ENCODE measurements at regions of chr5 and their contacts with region 1.

Region 1: GRCh38 chr5:178153573-178154343 is at the start of gene NHP2:
- DNase-seq: peak; percentile 96 to 98 (median 96)
- H3K4me3 ChIP-seq: peak within 1 kb of the TSS; percentile 65
- H3K4me3 Mint-ChIP-seq: peak within 1 kb of the TSS; percentile 92 to 98 (median 96)
- H3K27ac ChIP-seq: peak within 1 kb of the TSS; percentile 70
- H3K27ac Mint-ChIP-seq: peak within 1 kb of the TSS; percentile 87 to 96 (median 90)
- H3K4me1 ChIP-seq: peaks cover 34% of the 10 kb centered on the region
- H3K4me1 Mint-ChIP-seq: peaks cover 21 to 53% (median 30%) of the 10 kb centered on the region in 4 donors
- H3K27me3 ChIP-seq: no peaks in the 10 kb centered on the region
- H3K27me3 Mint-ChIP-seq: no peaks in the 10 kb centered on the region
- total RNA-seq, gene NHP2: 64.1 to 69.5 TPM

Region 2: GRCh38 chr5:177592010-177592834 is 561.5 kb before region 1 on chr5 and contains the start of gene TMED9:
- CTCF ChIA-PET with region 1: no interaction called
- POLR2A ChIA-PET with region 1: interaction called, 3 read pairs
- intact Hi-C with region 1: loop called (anchors 5 kb)
- DNase-seq: peak; percentile 88 to 91 (median 90)
- H3K4me3 ChIP-seq: peak within 1 kb of the TSS; percentile 97 to 98
- H3K4me3 Mint-ChIP-seq: peak within 1 kb of the TSS; percentile 96 to 100 (median 99)
- H3K27ac ChIP-seq: peak within 1 kb of the TSS; percentile 74
- H3K27ac Mint-ChIP-seq: peak within 1 kb of the TSS; percentile 91 to 99 (median 98)
- H3K4me1 ChIP-seq: peaks cover 26% of the 10 kb centered on the region
- H3K4me1 Mint-ChIP-seq: peaks cover 15 to 37% (median 26%) of the 10 kb centered on the region in 4 donors
- H3K27me3 ChIP-seq: no peaks in the 10 kb centered on the region
- H3K27me3 Mint-ChIP-seq: peaks cover 13 to 14% of the 10 kb centered on the region in 2 donors
- total RNA-seq, gene TMED9: 93.7 to 95.8 TPM

Region 3: GRCh38 chr5:178113199-178113787 is 40.5 kb before region 1 on chr5 and contains the start of gene N4BP3:
- CTCF ChIA-PET with region 1: interaction called, 3 read pairs
- POLR2A ChIA-PET with region 1: interaction called, 6 read pairs
- intact Hi-C with region 1: loop called (anchors 5 kb)
- DNase-seq: peak; percentile 76 to 85 (median 78)
- H3K4me3 ChIP-seq: peak within 1 kb of the TSS; percentile 45 to 57
- H3K4me3 Mint-ChIP-seq: peak within 1 kb of the TSS; percentile 86 to 95 (median 90)
- H3K27ac ChIP-seq: peak within 1 kb of the TSS; percentile 32
- H3K27ac Mint-ChIP-seq: peak within 1 kb of the TSS; percentile 87 to 92 (median 89)
- H3K4me1 ChIP-seq: peaks cover 44% of the 10 kb centered on the region
- H3K4me1 Mint-ChIP-seq: peaks cover 20 to 50% (median 34%) of the 10 kb centered on the region in 4 donors
- H3K27me3 ChIP-seq: no peaks in the 10 kb centered on the region
- H3K27me3 Mint-ChIP-seq: peaks cover 0 to 2% of the 10 kb centered on the region in 2 donors
- total RNA-seq, gene N4BP3: 1.7 to 2.0 TPM

Region 4: GRCh38 chr5:178130604-178131485 is 22.9 kb before region 1 on chr5 and contains the start of gene RMND5B:
- CTCF ChIA-PET with region 1: no interaction called
- POLR2A ChIA-PET with region 1: interaction called, 14 read pairs
- intact Hi-C with region 1: loop called (anchors 1 kb)
- DNase-seq: peak; percentile 78 to 82 (median 79)
- H3K4me3 ChIP-seq: peak within 1 kb of the TSS; percentile 69
- H3K4me3 Mint-ChIP-seq: peak within 1 kb of the TSS; percentile 84 to 93 (median 90)
- H3K27ac ChIP-seq: peak within 1 kb of the TSS; percentile 70
- H3K27ac Mint-ChIP-seq: peak within 1 kb of the TSS; percentile 70 to 96 (median 92)
- H3K4me1 ChIP-seq: peaks cover 8% of the 10 kb centered on the region
- H3K4me1 Mint-ChIP-seq: peaks cover 17 to 31% (median 24%) of the 10 kb centered on the region in 4 donors
- H3K27me3 ChIP-seq: no peaks in the 10 kb centered on the region
- H3K27me3 Mint-ChIP-seq: no peaks in the 10 kb centered on the region
- total RNA-seq, gene RMND5B: 38.6 to 39.0 TPM

Region 5: GRCh38 chr5:178204182-178204894 is 50.6 kb after region 1 on chr5 and contains the start of gene HNRNPAB:
- CTCF ChIA-PET with region 1: no interaction called
- POLR2A ChIA-PET with region 1: interaction called, 16 read pairs
- intact Hi-C with region 1: loop called (anchors 1 kb)
- DNase-seq: peak; percentile 94 to 95 (median 95)
- H3K4me3 ChIP-seq: peak within 1 kb of the TSS; percentile 85 to 98
- H3K4me3 Mint-ChIP-seq: peak within 1 kb of the TSS; percentile 97 to 100 (median 99)
- H3K27ac ChIP-seq: peak within 1 kb of the TSS; percentile 73
- H3K27ac Mint-ChIP-seq: peak within 1 kb of the TSS; percentile 97 to 100 (median 99)
- H3K4me1 ChIP-seq: peaks cover 37% of the 10 kb centered on the region
- H3K4me1 Mint-ChIP-seq: peaks cover 15 to 46% (median 27%) of the 10 kb centered on the region in 4 donors
- H3K27me3 ChIP-seq: no peaks in the 10 kb centered on the region
- H3K27me3 Mint-ChIP-seq: peaks cover 2% of the 10 kb centered on the region in 2 donors
- total RNA-seq, gene HNRNPAB: 82.1 to 85.3 TPM